Naive thymus-derived CD8-positive, alpha-beta T cell (primary cell): ENCODE measurements at regions of chr19 and their contacts with region 1.

Region 1: DNA sequence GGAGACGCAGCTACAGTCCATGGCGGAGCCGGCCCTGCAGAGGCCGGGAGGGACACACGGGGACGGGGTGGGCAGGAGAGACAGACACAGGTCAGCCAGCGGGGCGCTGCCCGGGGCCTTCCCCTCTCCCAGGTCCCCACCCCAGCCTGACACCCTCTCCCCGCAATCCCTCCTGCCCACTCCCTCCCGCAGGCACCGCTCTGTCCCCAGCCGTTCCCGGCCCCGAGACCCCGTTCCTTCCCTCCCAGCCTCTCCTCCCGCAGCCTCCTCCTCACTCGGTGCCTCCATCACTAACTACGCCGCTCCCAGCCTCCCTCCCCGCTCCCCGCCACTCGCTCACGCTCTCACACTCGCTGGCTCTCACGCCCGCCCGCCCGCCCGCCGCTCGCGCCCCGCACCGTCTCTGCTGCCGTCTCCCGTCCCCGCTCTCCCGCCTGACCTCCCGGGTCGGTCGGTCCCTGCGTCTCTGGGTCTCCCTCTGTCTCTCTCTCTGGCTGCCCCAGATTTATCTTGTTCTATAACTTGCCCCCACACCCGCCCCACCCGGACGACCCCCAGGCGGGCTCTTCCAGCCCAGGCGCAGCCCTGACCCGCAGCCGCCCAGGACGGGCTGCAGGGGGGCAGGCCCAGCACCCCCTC is 15.2 kb downstream of the ERFL start:
- DNase-seq: peak in 5 of 10 donors; percentile 31 to 64 (median 38)
- ATAC-seq: peak; percentile 27 to 32
- H3K4me3 Mint-ChIP-seq: peak overlapping the region in 9 of 10 donors; percentile 36 to 86 (median 55)
- H3K27ac Mint-ChIP-seq: peak overlapping the region in 5 of 10 donors; percentile 31 to 92 (median 85)
- H3K4me1 Mint-ChIP-seq: peaks cover 34 to 57% (median 42%) of the 10 kb centered on the region in 4 donors
- H3K27me3 Mint-ChIP-seq: peaks cover 0 to 3% (median 0%) of the 10 kb centered on the region in 5 donors

Region 2: GRCh38 chr19:41821003-41821735 is 91.8 kb before region 1 on chr19:
- POLR2A ChIA-PET with region 1: no interaction called
- DNase-seq: peak in 8 of 10 donors; percentile 27 to 73 (median 54)
- ATAC-seq: peak; percentile 80 to 88
- H3K4me3 Mint-ChIP-seq: no peak overlapping the region
- H3K27ac Mint-ChIP-seq: no peak overlapping the region
- H3K4me1 Mint-ChIP-seq: peaks cover 0 to 3% (median 0%) of the 10 kb centered on the region in 4 donors
- H3K27me3 Mint-ChIP-seq: peaks cover 4 to 28% (median 16%) of the 10 kb centered on the region in 5 donors

Region 3: GRCh38 chr19:41844601-41845000 is 68.4 kb before region 1 on chr19 and contains the start of gene LYPD4:
- POLR2A ChIA-PET with region 1: no interaction called
- DNase-seq: no peak
- ATAC-seq: no peak
- H3K4me3 Mint-ChIP-seq: no peak within 1 kb of the TSS
- H3K27ac Mint-ChIP-seq: peak within 1 kb of the TSS in 1 of 10 donors; percentile 50
- H3K4me1 Mint-ChIP-seq: peaks cover 0 to 4% (median 0%) of the 10 kb centered on the region in 4 donors
- H3K27me3 Mint-ChIP-seq: peaks cover 0 to 5% (median 0%) of the 10 kb centered on the region in 5 donors
- polyA plus RNA-seq, gene LYPD4: not detected

Region 4: DNA sequence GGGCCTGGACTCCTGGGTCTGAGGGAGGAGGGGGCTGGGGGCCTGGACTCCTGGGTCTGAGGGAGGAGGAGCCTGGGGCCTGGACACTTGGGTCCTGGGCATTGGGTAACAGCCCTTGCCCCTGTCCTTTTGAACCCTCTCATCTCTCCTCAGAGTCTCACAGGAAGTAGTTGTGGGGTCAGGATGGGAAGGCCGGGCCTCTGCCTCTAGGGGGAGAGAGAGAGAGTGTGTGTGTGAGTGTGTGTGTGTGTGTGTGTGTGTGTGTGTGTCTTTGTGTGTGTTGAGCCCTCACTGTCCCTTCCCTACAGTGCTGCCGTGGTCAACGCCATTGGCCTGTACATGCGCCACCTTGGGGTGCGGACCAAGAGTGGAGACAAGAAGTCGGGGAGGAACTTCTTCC is 19.1 kb before region 1 on chr19:
- POLR2A ChIA-PET with region 1: interaction called, 465 read pairs
- DNase-seq: peak in 1 of 10 donors; percentile 42
- ATAC-seq: peak; percentile 19 to 41
- H3K4me3 Mint-ChIP-seq: peak overlapping the region in 9 of 10 donors; percentile 53 to 86 (median 74)
- H3K27ac Mint-ChIP-seq: peak overlapping the region; percentile 78 to 98 (median 90)
- H3K4me1 Mint-ChIP-seq: peaks cover 37 to 81% (median 75%) of the 10 kb centered on the region in 4 donors
- H3K27me3 Mint-ChIP-seq: no peaks in the 10 kb centered on the region

Region 5: DNA sequence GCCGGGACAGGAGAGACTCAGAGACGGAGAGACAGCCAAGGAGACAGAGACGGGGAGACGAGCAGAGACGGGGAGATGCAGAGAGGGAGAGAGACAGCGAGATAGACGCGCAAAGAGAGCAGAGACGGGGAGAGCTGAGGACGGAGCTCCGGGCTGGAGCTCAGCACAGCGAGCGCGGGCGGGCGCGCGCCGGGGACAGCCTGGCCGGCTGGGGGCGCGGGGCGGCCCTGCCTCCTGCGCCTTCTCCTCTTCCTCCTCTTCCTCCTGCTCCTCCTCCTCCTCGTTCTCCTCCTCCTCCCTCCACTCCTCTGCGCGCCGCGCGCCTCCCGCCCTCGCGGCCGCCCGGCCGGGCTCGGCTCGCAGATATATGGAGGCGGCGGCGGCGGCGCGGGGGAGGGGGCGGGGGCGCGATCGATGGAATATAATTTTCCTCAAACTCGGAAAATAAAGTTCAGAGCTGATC is 15.2 kb after region 1 on chr19 and contains the start of gene ERFL:
- POLR2A ChIA-PET with region 1: interaction called, 24 read pairs
- DNase-seq: peak in 1 of 10 donors; percentile 34
- ATAC-seq: peak; percentile 37 to 47
- H3K4me3 Mint-ChIP-seq: peak within 1 kb of the TSS in 7 of 10 donors; percentile 86 to 97 (median 94)
- H3K27ac Mint-ChIP-seq: peak within 1 kb of the TSS in 9 of 10 donors; percentile 83 to 94 (median 91)
- H3K4me1 Mint-ChIP-seq: peaks cover 24 to 43% (median 37%) of the 10 kb centered on the region in 4 donors
- H3K27me3 Mint-ChIP-seq: peaks cover 0 to 5% (median 0%) of the 10 kb centered on the region in 5 donors
- polyA plus RNA-seq, gene ERFL: not detected

Region 6: DNA sequence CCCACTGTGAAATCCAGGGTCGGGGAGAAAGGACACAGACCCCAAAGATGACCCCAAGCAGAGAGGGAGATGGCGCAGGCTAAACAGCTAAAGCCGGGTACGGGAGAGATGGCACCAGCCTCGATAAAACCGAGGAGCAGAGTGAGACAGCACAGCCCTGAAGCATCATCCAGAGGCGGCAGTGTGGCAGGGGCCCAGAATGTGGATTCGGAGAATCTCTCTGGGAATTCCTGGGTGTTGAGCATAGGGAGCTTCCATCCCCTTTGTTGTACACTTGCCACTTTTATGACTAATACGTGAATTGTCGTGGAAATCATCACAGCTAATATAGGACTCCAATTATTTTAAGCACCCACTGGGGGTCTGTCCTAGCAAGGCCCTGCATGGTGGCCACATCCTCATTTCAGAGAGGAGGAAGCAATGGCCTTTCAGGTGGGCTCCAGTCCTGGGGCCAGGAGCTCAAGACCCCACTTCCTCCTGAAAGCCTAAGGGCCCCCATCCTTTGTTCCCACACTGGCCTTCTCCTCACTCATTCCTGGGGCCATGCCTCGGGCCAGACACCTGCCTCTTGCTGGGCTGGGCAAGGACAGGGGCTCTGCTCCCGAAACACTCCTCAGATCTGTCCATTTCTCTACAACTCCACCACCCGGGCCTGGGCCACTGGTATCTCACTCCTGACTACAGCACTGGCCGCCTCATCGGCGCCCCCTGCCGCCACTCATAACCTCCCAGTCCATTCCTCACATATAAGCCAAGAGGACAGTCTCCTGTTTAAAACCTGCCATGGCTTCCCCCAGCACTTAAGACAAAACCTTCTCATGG is 110.3 kb after region 1 on chr19:
- POLR2A ChIA-PET with region 1: no interaction called
- DNase-seq: no peak
- ATAC-seq: no peak
- H3K4me3 Mint-ChIP-seq: no peak overlapping the region
- H3K27ac Mint-ChIP-seq: peak overlapping the region in 2 of 10 donors; percentile 2 to 67
- H3K4me1 Mint-ChIP-seq: peaks cover 3 to 12% (median 7%) of the 10 kb centered on the region in 4 donors
- H3K27me3 Mint-ChIP-seq: peaks cover 2 to 29% (median 9%) of the 10 kb centered on the region in 5 donors